Cardiac septum (tissue), 1 donor: ENCODE measurements at regions of chr9 and their contacts with region 1.

Region 1: DNA sequence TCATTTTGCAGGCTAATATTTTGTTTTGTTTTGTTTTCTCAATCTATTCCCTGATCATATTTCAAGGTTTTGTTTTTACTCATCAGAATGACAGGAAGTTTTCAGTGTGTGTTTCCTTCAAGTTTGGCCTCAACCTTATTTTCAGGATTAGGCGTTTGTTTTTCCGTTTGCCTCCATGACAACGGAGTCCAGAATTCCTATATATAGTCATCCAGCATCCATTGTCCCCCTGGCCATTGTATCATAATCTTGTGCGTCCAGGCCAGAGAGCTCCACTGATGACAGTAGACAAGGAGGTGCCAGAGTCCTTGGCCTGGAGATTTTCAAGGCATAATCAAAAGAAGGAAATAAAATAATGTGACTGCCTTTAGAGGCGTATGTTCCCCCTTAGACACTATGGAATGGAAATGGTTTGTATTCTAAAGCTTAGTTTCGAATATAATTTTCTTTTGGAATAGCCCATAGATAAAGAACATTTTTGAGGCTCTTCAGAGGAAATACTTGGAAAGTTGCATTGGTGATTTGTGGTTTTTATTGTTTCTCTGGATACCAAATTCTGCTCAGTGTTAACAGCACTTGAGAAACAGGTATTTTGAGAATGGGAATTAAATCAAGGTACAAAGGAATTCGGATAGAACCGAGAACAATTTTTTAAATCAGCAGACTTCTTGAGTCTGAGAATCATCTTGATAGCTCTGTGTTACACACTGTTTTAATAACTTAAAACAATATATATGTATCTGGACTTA is 99.8 kb downstream of the ZNF462 start:
- DNase-seq: no peak

Region 2: GRCh38 chr9:106921341-106921899 is 41.4 kb before region 1 on chr9:
- intact Hi-C with region 1: loop called (anchors 2 kb)
- DNase-seq: no peak

Region 3: DNA sequence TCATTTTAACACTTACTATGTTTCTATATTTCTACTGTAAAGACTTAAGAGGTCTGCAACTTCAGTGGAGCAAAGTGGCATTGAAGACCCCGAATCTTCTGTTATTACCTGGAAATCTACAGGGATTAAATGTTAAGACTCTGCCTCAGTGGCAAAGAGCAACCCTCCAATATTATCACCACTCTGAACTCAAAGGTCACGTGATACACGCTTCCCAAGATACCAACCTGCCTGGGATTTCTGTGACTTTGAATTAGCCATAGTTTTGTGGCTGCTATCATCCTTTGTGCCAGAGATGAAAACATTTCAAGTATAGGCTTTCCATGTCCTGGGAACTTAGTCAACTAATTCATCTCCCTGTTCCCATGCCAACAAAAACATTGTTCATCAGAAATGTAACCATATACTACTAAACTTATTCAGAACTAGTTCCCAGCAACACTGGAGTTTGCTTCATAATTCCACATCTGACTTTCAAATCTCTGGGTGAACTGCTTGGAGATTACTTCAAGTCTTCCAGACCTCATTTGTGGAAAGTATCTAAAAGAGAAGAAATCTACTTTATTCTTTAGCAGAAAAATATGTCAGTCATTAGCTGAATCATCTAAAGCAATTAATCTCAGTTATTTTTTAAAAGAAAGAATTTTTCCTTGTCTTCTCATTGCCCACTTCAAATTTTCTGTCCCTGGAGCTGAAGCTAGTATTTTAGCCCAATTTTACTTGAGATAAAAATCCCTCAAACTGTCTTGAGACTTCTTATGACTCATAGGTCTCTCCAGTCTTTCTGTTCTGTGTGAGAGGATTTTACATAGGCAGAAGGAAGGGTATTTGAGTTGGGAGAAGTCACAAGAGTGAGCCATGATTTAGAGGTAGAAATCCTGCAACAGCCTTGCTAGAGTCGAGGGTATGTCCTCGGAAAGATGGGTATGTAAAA is 16.8 kb before region 1 on chr9:
- intact Hi-C with region 1: loop called (anchors 1 kb)
- DNase-seq: no peak

Region 4: GRCh38 chr9:107155244-107155817 is 192.5 kb after region 1 on chr9:
- intact Hi-C with region 1: no loop called
- DNase-seq: no peak